ENCODE measurements at regions of chr7 and their contacts with region 1.

Region 1: DNA sequence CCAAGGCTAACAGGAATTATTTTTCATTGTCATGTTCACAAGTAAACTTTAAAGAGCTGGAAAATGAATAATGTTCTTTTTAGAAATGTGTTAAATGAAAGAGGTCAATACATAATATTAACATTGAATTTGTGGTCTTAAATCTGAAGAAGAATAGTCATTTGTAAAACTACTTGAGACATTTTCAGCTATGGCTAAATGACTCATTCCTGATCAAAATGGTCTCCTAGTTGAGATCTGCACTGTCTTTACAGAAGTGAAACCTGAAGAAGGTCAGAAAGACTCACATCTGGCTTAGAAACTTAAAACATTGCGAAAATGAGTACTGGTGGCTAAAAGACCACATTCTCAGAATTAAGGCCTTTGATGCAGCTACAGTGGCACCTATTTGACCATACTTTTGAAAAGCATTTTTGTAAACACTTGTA is 5.9 kb downstream of the PIK3CG start:
- DNase-seq: no peak
- H3K4me3 Mint-ChIP-seq: peak overlapping the region; percentile 37
- H3K27ac Mint-ChIP-seq: peak overlapping the region; percentile 64
- H3K4me1 Mint-ChIP-seq: peaks cover 63% of the 10 kb centered on the region
- H3K27me3 Mint-ChIP-seq: no peaks in the 10 kb centered on the region

Region 2: GRCh38 chr7:106425017-106425719 is 445.8 kb before region 1 on chr7:
- intact Hi-C with region 1: loop called (anchors 5 kb)
- DNase-seq: peak; percentile 44
- H3K4me3 Mint-ChIP-seq: peak overlapping the region; percentile 65
- H3K27ac Mint-ChIP-seq: peak overlapping the region; percentile 98
- H3K4me1 Mint-ChIP-seq: peaks cover 75% of the 10 kb centered on the region
- H3K27me3 Mint-ChIP-seq: no peaks in the 10 kb centered on the region

Region 3: DNA sequence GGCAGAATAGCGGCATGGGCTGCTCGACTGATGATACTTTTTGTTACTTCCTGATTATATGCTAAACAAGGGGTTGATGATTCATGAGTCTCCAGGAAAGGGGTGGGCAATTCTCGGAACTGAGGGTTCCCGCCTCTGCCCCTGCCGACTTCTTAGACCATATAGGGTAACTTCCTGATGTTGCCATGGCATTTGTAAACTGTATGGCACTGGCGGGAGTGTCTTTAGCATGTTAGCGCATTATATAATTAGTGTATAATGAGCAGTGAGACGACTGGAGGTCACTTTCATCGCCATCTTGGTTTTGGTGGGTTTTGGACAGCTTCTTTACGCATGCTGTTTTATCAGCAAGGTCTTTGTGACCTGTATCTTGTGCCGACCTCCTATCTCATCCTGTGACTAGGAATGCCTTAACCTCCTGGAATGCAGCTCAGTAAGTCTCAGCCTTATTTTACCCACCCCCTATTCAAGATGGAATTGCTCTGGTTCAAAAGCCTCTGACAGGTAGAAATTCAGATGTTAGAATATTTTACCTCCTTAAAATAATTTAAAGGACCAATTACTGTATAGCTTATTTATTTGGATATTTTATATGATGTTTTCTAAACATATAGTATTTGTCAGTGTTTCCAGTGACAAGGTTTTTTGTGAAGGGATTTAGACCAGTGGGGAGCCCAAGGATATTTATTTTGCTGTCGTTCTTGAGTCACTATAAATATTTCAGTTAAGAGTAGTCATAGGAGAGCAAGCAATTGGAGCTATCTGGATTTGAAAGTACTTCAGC is 96.0 kb before region 1 on chr7:
- intact Hi-C with region 1: loop called (anchors 2 kb)
- DNase-seq: no peak
- H3K4me3 Mint-ChIP-seq: no peak overlapping the region
- H3K27ac Mint-ChIP-seq: peak overlapping the region; percentile 14
- H3K4me1 Mint-ChIP-seq: peaks cover 36% of the 10 kb centered on the region
- H3K27me3 Mint-ChIP-seq: no peaks in the 10 kb centered on the region

Region 4: DNA sequence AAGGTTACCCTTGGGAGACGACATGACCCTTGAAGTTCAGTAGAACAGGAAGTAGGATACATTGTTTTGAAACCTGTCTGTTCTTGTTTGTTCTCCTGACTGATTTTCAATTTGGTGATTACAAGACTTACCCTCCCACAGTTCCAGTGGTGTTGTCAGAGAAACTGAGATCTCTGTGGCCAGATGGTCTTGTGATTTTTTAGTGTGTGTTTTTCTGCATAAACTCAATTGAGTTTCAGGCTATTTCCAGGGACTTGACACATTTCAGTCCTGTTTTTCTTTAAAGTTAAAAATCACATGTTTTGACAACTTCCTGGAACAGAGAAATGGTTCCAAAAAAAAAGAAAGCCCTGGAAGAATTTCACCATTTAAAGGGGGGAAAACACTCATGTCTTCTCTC is 16.4 kb after region 1 on chr7:
- intact Hi-C with region 1: loop called (anchors 1 kb)
- DNase-seq: no peak
- H3K4me3 Mint-ChIP-seq: no peak overlapping the region
- H3K27ac Mint-ChIP-seq: peak overlapping the region; percentile 74
- H3K4me1 Mint-ChIP-seq: peaks cover 26% of the 10 kb centered on the region
- H3K27me3 Mint-ChIP-seq: no peaks in the 10 kb centered on the region

Region 5: GRCh38 chr7:106901828-106902441 is 30.9 kb after region 1 on chr7:
- intact Hi-C with region 1: no loop called
- DNase-seq: no peak
- H3K4me3 Mint-ChIP-seq: no peak overlapping the region
- H3K27ac Mint-ChIP-seq: no peak overlapping the region
- H3K4me1 Mint-ChIP-seq: peaks cover 16% of the 10 kb centered on the region
- H3K27me3 Mint-ChIP-seq: no peaks in the 10 kb centered on the region

Region 6: DNA sequence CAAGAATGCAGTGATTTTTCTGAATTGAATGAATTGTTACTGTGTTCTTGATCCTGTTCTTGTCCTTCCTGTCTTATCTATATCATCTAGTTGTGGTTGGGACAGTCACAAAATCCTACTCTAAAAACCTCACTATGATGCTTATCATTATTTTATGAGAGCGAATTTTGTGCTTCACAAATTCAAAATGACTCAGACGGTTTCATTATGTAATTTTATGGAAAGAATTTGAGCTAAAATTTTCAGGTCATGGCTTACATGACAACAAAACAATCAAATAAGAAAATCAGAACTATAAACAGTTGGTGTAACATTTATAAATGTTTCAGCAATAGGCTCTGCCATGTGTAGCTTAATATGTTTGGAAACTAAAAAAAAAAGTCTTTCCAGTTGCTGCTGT is 180.4 kb after region 1 on chr7:
- intact Hi-C with region 1: loop called (anchors 1 kb)
- DNase-seq: no peak
- H3K4me3 Mint-ChIP-seq: no peak overlapping the region
- H3K27ac Mint-ChIP-seq: no peak overlapping the region
- H3K4me1 Mint-ChIP-seq: peaks cover 10% of the 10 kb centered on the region
- H3K27me3 Mint-ChIP-seq: peaks cover 70% of the 10 kb centered on the region